ENCODE measurements at regions of chr9 and their contacts with region 1.

Region 1: GRCh38 chr9:78369639-78370219 is 72.8 kb downstream of the PSAT1 start:
- DNase-seq: peak; percentile 86
- H3K4me3 Mint-ChIP-seq: no peak overlapping the region
- H3K27ac Mint-ChIP-seq: no peak overlapping the region
- H3K4me1 Mint-ChIP-seq: no peaks in the 10 kb centered on the region
- H3K27me3 Mint-ChIP-seq: peaks cover 18% of the 10 kb centered on the region

Region 2: DNA sequence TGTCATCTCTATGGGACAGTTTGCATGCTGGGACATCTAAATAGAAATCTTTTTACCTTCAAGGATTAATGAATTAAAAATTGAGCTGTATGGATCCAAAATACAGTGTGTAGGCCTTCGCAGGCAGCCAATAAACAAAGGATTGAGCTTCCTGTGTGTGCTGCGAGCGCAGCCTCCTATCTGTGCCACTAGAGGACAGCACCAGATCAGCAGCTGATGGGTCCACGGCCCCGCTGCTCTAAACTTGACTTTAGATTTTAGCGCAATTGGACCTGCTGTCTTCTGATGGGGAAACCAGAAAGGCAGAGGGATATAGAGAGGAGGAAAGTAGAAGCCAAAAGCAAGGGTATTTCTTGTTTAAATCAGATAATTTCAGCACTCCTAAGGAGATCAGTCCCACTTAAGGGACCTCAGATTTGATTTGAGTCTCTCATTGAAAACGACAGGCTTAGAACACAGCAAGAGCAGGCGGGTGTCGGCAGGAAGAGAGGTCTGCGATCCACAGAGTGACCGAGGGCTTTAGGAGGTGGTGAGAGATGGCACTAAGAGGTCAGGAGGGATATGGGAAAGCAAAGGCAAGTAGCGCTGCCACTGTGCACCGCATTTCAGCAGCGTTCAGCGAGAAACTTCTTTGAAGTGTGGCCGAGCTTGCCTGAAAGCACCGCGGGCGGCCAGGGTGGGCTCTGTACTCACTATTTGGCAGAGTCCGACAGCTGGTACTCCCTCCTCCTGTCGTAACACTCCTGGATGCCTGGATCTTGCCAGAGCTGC is 935.9 kb before region 1 on chr9:
- intact Hi-C with region 1: loop called (anchors 10 kb)
- DNase-seq: peak; percentile 82
- H3K4me3 Mint-ChIP-seq: no peak overlapping the region
- H3K27ac Mint-ChIP-seq: no peak overlapping the region
- H3K4me1 Mint-ChIP-seq: no peaks in the 10 kb centered on the region
- H3K27me3 Mint-ChIP-seq: peaks cover 2% of the 10 kb centered on the region

Region 3: GRCh38 chr9:78261403-78262001 is 108.2 kb before region 1 on chr9:
- intact Hi-C with region 1: loop called (anchors 1 kb)
- DNase-seq: no peak
- H3K4me3 Mint-ChIP-seq: no peak overlapping the region
- H3K27ac Mint-ChIP-seq: no peak overlapping the region
- H3K4me1 Mint-ChIP-seq: no peaks in the 10 kb centered on the region
- H3K27me3 Mint-ChIP-seq: no peaks in the 10 kb centered on the region

Region 4: DNA sequence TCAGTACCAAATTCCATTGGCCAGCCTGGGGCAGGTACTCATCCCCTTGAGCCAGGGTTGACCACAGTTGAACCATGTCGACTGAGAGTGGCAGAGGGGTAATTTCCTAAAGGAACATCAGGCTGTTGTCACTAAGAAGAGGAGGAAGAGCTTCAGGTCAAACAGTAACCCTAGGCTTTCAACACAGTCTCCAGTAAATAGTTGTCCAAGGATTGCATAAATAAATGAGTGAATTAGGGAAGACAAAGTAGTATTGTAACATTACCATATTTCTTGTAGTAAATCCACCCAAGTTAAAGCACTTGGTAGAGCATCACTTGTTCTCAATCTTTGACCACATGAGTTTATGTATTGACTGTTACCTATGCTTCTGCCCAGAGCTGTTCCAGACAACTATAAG is 65.4 kb before region 1 on chr9:
- intact Hi-C with region 1: no loop called
- DNase-seq: no peak
- H3K4me3 Mint-ChIP-seq: no peak overlapping the region
- H3K27ac Mint-ChIP-seq: no peak overlapping the region
- H3K4me1 Mint-ChIP-seq: peaks cover 14% of the 10 kb centered on the region
- H3K27me3 Mint-ChIP-seq: no peaks in the 10 kb centered on the region

Measured in activated CD4-positive, alpha-beta T cell treated with anti-CD3 and anti-CD28 coated beads, Interleukin-2, amount 10 ng/mL, durations not matched to agents 24 days and 14 days (primary cell).